ENCODE measurements at regions of chr6 and their contacts with region 1.

Region 1: GRCh38 chr6:93419304-93420162 is at the start of gene EPHA7:
- DNase-seq: peak; percentile 93
- H3K4me3 ChIP-seq: peak within 1 kb of the TSS; percentile 37 to 69 (median 57)
- H3K27ac ChIP-seq: no peak within 1 kb of the TSS
- H3K4me1 ChIP-seq: peaks cover 35% of the 10 kb centered on the region
- H3K27me3 ChIP-seq: peaks cover 27 to 73% of the 10 kb centered on the region in 2 experiments
- CTCF ChIP-seq: no peak
- POLR2A ChIP-seq: no peak
- total RNA-seq, gene EPHA7: 0.09 TPM in 1 of 2 replicates, not detected in the other

Region 2: GRCh38 chr6:92810913-92811312 is 608.6 kb before region 1 on chr6:
- CTCF ChIA-PET with region 1: interaction called, 239 read pairs
- POLR2A ChIA-PET with region 1: no interaction called
- dilution Hi-C with region 1: no loop called
- intact Hi-C with region 1: loop called (anchors 1 kb)
- DNase-seq: peak; percentile 45
- H3K4me3 ChIP-seq: no peak overlapping the region
- H3K27ac ChIP-seq: no peak overlapping the region
- H3K4me1 ChIP-seq: no peaks in the 10 kb centered on the region
- H3K27me3 ChIP-seq: no peaks in the 10 kb centered on the region
- CTCF ChIP-seq: peak; percentile 50 to 69
- POLR2A ChIP-seq: no peak

Region 3: DNA sequence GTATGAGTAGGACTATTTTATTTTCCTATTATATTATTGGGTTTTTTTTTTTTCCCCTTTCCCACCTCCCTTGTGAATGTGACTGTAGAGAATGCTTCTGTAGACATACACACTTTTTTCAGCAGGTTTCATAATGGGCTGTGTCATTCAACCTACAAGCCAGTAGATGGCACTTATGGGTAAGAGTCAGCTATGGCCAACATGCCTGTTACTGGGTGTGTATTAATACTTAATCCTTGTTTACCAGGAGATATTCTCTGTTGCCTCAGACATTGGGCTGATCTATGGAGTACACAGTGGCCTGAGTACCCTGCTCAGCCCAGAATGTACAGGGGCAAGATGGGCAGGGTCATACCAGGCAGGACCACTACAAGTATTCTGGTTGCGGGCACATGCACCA is 382.7 kb before region 1 on chr6:
- CTCF ChIA-PET with region 1: interaction called, 103 read pairs
- POLR2A ChIA-PET with region 1: no interaction called
- dilution Hi-C with region 1: no loop called
- intact Hi-C with region 1: loop called (anchors 1 kb)
- DNase-seq: peak; percentile 29
- H3K4me3 ChIP-seq: no peak overlapping the region
- H3K27ac ChIP-seq: no peak overlapping the region
- H3K4me1 ChIP-seq: peaks cover 20% of the 10 kb centered on the region
- H3K27me3 ChIP-seq: no peaks in the 10 kb centered on the region
- CTCF ChIP-seq: peak; percentile 43 to 48
- POLR2A ChIP-seq: no peak

Region 4: DNA sequence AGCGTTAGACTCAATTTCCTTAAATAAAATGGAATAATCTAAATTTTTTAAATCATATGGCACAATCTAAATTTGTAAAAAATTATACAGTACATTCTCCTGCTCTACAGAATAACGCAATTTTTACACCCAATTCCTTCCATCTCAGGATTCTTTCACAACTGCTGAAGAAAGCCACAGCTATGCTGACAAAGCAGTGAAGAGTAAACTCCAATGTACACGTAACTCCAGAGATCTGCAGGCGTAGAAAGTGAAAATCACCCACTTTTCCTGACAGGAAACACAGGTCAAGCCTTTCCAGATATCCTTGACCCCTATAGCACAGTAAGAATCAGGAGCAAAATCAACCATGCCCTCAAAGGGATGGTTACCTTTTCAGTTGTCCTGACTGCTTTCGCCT is 27.6 kb before region 1 on chr6:
- CTCF ChIA-PET with region 1: interaction called, 15 read pairs
- POLR2A ChIA-PET with region 1: no interaction called
- dilution Hi-C with region 1: no loop called
- intact Hi-C with region 1: no loop called
- DNase-seq: no peak
- H3K4me3 ChIP-seq: no peak overlapping the region
- H3K27ac ChIP-seq: no peak overlapping the region
- H3K4me1 ChIP-seq: no peaks in the 10 kb centered on the region
- H3K27me3 ChIP-seq: no peaks in the 10 kb centered on the region
- CTCF ChIP-seq: no peak
- POLR2A ChIP-seq: no peak

Region 5: DNA sequence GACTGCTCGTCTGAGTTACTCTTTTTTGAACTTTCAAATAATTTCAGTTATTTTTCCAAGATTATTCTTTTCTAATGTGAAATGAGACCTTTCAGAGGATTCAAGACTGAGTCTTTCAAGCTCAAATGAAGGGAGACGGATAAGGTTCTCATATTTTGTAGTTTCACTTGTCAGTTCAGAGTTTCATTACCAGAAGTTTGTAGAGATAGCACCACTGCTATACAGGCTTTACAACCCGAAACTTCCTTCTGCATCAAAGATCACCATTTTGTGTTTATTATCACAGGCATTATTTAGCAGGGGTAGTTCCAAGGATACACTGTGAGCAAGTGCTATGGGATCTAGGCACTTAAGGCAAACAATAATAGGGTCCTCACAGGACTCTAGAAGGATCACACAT is 74.5 kb after region 1 on chr6:
- CTCF ChIA-PET with region 1: no interaction called
- POLR2A ChIA-PET with region 1: no interaction called
- dilution Hi-C with region 1: no loop called
- intact Hi-C with region 1: no loop called
- DNase-seq: no peak
- H3K4me3 ChIP-seq: no peak overlapping the region
- H3K27ac ChIP-seq: no peak overlapping the region
- H3K4me1 ChIP-seq: no peaks in the 10 kb centered on the region
- H3K27me3 ChIP-seq: no peaks in the 10 kb centered on the region
- CTCF ChIP-seq: no peak
- POLR2A ChIP-seq: no peak

Region 6: GRCh38 chr6:94071835-94072234 is 652.3 kb after region 1 on chr6:
- CTCF ChIA-PET with region 1: no interaction called
- POLR2A ChIA-PET with region 1: no interaction called
- dilution Hi-C with region 1: no loop called
- intact Hi-C with region 1: loop called (anchors 10 kb)
- DNase-seq: no peak
- H3K4me3 ChIP-seq: no peak overlapping the region
- H3K27ac ChIP-seq: no peak overlapping the region
- H3K4me1 ChIP-seq: no peaks in the 10 kb centered on the region
- H3K27me3 ChIP-seq: no peaks in the 10 kb centered on the region
- CTCF ChIP-seq: no peak
- POLR2A ChIP-seq: no peak

Measured in endothelial cell of umbilical vein (primary cell).